A549 (cell line): ENCODE measurements at regions of chr20 and their contacts with region 1.

Region 1: DNA sequence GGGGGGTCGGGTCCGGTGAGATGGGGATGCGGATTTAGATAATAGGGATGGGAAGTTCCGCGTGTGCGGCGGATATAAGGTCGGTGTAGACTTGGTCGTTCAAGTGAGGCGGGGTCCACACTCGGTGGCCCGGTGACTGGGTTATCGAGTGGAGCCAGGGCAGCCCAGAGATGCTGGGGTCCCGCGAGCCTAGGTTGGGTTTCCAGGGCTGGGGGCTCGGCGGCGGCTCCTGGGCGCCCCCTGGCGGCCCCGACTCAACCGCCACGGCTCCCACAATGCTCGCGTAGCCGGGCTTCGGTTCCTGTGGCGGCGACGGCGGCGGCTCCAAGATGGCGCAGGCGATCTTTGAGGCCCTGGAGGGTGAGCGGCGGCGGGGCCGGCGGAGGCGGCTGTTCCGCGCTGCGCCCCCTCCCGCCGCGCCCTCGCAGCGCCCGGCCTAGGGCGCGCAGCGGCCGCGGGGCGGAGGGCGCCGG is at the start of gene ZNF341:
- DNase-seq: peak; percentile 55 to 91
- ATAC-seq: peak; percentile 79 to 80
- H3K4me3 ChIP-seq: peak within 1 kb of the TSS; percentile 58
- H3K27ac ChIP-seq: peak within 1 kb of the TSS; percentile 98
- H3K4me1 ChIP-seq: peaks cover 28% of the 10 kb centered on the region
- CTCF ChIP-seq: peak; percentile 91
- EP300 ChIP-seq: 0 out of 5 replicates have a peak, but pooled peaks of 1 of the 2 experiments have one; percentile 41
- POLR2A ChIP-seq: no peak; the same call in 1 of the 2 replicates
- RAD21 ChIP-seq: peak; percentile 60 to 86
- polyA plus RNA-seq, gene ZNF341: 2.1 and 2.7 TPM in 2 replicates

Region 2: GRCh38 chr20:33621717-33622400 is 109.9 kb before region 1 on chr20:
- CTCF ChIA-PET with region 1: no interaction called
- POLR2A ChIA-PET with region 1: no interaction called
- DNase-seq: no peak
- ATAC-seq: no peak
- H3K4me3 ChIP-seq: no peak overlapping the region
- H3K27ac ChIP-seq: no peak overlapping the region
- H3K4me1 ChIP-seq: no peaks in the 10 kb centered on the region
- CTCF ChIP-seq: no peak
- EP300 ChIP-seq: no peak
- POLR2A ChIP-seq: no peak
- RAD21 ChIP-seq: no peak

Region 3: DNA sequence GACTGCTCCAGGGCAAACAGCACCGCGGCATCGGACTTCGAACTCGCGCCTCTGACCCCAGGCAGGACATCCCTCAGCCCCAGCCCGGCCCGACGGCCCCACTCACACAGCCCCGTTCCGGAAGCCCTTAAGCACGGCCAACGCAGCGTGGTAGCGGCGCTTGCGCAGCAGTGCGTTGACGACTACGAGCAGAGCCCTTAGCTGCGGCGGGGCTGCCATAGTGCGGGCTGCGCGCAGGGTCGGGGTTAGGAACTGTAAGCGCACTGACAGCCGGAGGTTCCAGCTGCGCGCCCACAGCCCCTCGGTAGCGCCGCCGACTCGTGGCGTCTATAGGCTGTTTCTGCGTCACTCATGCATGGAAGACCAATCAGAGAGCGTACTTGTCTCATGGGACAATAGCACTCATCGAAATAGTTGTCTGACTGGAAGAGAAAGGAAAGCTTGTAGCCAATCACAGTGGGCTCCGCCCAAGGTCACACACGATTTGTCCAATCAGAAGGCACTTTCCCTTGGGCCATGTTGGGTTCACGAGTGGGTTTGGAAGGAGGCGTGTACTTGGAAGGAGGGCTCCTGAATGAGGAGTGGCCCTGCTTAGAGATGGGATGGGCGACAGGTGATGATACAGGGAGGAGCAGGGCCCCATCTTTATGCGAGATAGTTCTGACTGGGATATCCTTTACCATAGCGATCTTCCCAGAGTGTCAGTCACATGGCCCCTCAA is 11.6 kb before region 1 on chr20 and contains the start of gene PXMP4:
- CTCF ChIA-PET with region 1: interaction called, 10 read pairs
- POLR2A ChIA-PET with region 1: interaction called, 12 read pairs
- DNase-seq: peak; percentile 99 to 100
- ATAC-seq: peak; percentile 99
- H3K4me3 ChIP-seq: peak within 1 kb of the TSS; percentile 73
- H3K27ac ChIP-seq: peak within 1 kb of the TSS; percentile 64 to 84
- H3K4me1 ChIP-seq: peaks cover 14% of the 10 kb centered on the region; the same call in 1 of the 3 replicates
- CTCF ChIP-seq: no peak
- EP300 ChIP-seq: no peak
- POLR2A ChIP-seq: peak; percentile 24
- RAD21 ChIP-seq: no peak
- polyA plus RNA-seq, gene PXMP4: 6.6 and 7.3 TPM in 2 replicates

Region 4: GRCh38 chr20:33992923-33993575 is 261.3 kb after region 1 on chr20:
- CTCF ChIA-PET with region 1: no interaction called
- POLR2A ChIA-PET with region 1: interaction called, 14 read pairs
- DNase-seq: peak; percentile 95 to 99
- ATAC-seq: peak; percentile 75 to 88
- H3K4me3 ChIP-seq: peak overlapping the region; percentile 71
- H3K27ac ChIP-seq: peak overlapping the region; percentile 92 to 94
- H3K4me1 ChIP-seq: peaks cover 21% of the 10 kb centered on the region
- CTCF ChIP-seq: no peak
- EP300 ChIP-seq: no peak
- POLR2A ChIP-seq: peak; percentile 96
- RAD21 ChIP-seq: no peak

Region 5: DNA sequence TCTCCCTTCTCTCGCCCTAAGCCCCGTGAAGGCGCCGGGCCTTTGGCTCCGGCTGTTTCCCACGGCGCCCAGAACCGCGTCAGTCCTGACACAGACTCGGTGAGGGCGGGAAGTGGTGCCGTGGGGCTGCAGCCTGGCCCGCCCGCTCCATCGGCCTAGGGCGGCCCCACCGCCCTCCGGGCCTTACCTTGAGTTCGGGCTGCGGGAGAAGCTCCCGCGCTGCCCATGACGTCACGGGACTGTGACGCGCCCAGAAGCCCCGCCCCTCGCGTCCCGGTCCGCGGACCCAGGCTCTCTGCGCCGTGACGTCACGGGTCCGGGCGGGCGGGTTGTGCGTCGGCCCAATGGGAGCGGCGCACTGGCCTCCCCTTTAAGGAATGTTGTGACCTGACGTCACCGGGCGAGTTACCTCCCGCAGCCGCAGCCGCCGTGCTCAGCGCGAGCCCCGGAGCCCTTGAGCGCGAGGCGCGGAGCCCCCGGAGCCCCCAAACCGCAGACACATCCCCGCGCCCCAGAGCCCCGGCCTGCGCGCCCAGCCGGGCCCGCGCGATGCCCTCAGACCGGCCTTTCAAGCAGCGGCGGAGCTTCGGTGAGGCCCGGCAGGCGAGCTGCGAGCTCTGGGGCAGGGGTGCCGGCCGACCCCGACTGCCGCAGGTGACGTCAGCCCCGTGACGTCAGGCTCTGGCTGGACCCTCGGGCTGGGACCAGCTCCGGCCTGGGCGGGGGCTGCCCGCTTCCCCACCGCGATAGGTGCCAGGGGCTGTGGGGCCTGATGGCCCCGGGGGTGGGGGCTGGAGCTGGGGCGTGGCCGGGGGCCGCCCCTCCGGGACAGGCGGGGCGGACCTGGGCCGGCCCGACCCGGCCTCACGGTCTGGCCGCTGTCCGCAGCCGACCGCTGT is 826.8 kb after region 1 on chr20 and contains the start of gene MAP1LC3A:
- CTCF ChIA-PET with region 1: no interaction called
- POLR2A ChIA-PET with region 1: no interaction called
- DNase-seq: peak; percentile 91 to 97
- ATAC-seq: peak; percentile 88 to 91
- H3K4me3 ChIP-seq: peak within 1 kb of the TSS; percentile 67
- H3K27ac ChIP-seq: peak within 1 kb of the TSS; percentile 73 to 93
- H3K4me1 ChIP-seq: peaks cover 18% of the 10 kb centered on the region
- CTCF ChIP-seq: no peak
- EP300 ChIP-seq: no peak
- POLR2A ChIP-seq: peak; percentile 19; the same call in 1 of the 2 replicates
- RAD21 ChIP-seq: no peak
- polyA plus RNA-seq, gene MAP1LC3A: 3.7 and 4.3 TPM in 2 replicates